Aorta (tissue), 5 donors: ENCODE measurements at regions of chr4 and their contacts with region 1.

Region 1: GRCh38 chr4:158865520-158866177 is 96.8 kb downstream of the FNIP2 start:
- DNase-seq: no peak
- ATAC-seq: no peak
- H3K4me3 ChIP-seq: no peak overlapping the region
- H3K27ac ChIP-seq: no peak overlapping the region
- H3K4me1 ChIP-seq: peaks cover 3 to 7% of the 10 kb centered on the region in 2 donors
- H3K27me3 ChIP-seq: no peaks in the 10 kb centered on the region

Region 2: DNA sequence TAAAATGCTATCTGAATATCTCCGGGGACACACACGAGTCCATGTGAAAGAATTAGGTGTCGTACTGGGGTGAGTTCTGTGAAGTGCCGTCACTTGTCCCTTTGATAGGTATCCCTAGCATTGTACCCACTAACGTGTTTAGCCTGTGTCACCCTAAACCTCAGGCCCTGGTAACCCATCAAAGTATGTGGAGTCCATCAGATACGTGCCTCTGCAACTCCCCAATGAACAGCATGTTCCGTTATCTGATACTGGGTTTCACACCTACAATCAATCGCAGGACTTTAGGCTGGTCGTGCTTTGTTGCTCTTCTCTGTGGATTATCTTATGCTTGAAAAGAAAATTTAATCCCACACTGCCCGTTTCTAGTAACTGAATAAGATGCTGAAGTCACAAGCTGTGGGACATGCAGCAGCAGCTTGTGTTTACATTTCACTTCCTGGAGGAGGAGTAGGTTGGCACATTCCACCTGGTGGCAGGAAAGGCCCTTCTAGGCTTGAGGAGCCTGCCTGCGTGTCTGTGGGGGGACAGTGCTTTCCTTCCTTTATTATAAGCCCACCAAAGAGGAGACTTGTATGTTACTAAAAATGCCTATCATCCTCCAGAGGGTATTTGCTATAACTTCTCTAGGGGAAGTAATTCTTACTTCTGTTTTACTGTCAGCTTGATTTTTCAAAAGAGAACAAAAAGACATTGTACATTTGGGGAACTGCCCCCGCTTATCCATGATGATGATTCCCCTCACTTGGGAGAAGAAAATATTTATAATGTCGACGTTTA is 30.3 kb after region 1 on chr4:
- intact Hi-C with region 1: loop called in 1 of 2 experiments (anchors 2 kb)
- DNase-seq: no peak
- ATAC-seq: no peak
- H3K4me3 ChIP-seq: no peak overlapping the region
- H3K27ac ChIP-seq: no peak overlapping the region
- H3K4me1 ChIP-seq: peaks cover 0 to 2% of the 10 kb centered on the region in 2 donors
- H3K27me3 ChIP-seq: no peaks in the 10 kb centered on the region